Activated T-helper 1 cell treated with anti-CD3 and anti-CD28 coated beads, Interleukin-12 subunit alpha, Interleukin-12 subunit beta, Interleukin-2, Interleukin-4 antibody, amounts not matched to agents 30 ng/mL and 10 ng/mL and 1 ng/mL, durations not matched to agents 14 hours and 24 hours and 36 hours (primary cell): ENCODE measurements at regions of chr19 and their contacts with region 1.

Region 1: GRCh38 chr19:49640113-49640898 is at the start of gene RRAS:
- DNase-seq: peak; percentile 100
- H3K4me3 Mint-ChIP-seq: peak within 1 kb of the TSS; percentile 94
- H3K27ac Mint-ChIP-seq: peak within 1 kb of the TSS; percentile 99
- H3K4me1 Mint-ChIP-seq: peaks cover 55% of the 10 kb centered on the region
- H3K27me3 Mint-ChIP-seq: no peaks in the 10 kb centered on the region
- total RNA-seq, gene RRAS: 4.4 and 4.7 TPM in 2 replicates

Region 2: DNA sequence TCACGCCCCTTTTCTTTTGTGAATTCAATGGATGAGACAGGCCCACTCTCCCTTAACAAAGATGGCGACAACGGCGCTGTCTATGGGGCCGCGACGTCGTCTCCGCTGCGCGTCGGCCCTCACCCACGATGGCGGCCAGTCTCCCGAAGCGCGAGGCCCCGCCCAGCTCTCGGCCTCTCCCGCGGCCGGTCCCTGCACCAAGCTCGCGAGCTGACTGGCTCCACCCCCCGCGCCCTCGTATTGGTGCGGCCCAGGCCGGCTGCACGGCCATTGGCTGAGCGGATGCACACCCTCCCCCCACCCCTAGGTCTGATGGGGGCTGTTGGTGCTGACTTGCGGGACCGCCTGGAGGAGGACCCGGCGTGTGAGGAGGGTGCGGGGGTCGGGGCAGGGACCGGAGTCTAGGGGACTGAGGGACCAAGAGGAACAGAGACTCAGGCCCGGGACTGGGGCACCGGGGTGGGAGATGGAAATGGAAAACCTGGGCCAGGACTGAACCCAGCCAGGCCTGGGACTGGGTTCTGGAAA is 1016.2 kb before region 1 on chr19:
- intact Hi-C with region 1: loop called (anchors 5 kb)
- DNase-seq: peak; percentile 97
- H3K4me3 Mint-ChIP-seq: peak overlapping the region; percentile 83
- H3K27ac Mint-ChIP-seq: peak overlapping the region; percentile 94
- H3K4me1 Mint-ChIP-seq: peaks cover 39% of the 10 kb centered on the region
- H3K27me3 Mint-ChIP-seq: no peaks in the 10 kb centered on the region

Region 3: GRCh38 chr19:49451430-49452181 is 188.7 kb before region 1 on chr19 and contains the start of gene PIH1D1:
- intact Hi-C with region 1: loop called (anchors 1 kb)
- DNase-seq: peak; percentile 94
- H3K4me3 Mint-ChIP-seq: peak within 1 kb of the TSS; percentile 96
- H3K27ac Mint-ChIP-seq: peak within 1 kb of the TSS; percentile 99
- H3K4me1 Mint-ChIP-seq: peaks cover 55% of the 10 kb centered on the region
- H3K27me3 Mint-ChIP-seq: no peaks in the 10 kb centered on the region
- total RNA-seq, gene PIH1D1: 124 and 126 TPM in 2 replicates

Region 4: GRCh38 chr19:49544154-49544553 is 96.2 kb before region 1 on chr19:
- intact Hi-C with region 1: no loop called
- DNase-seq: no peak
- H3K4me3 Mint-ChIP-seq: no peak overlapping the region
- H3K27ac Mint-ChIP-seq: peak overlapping the region; percentile 64
- H3K4me1 Mint-ChIP-seq: peaks cover 26% of the 10 kb centered on the region
- H3K27me3 Mint-ChIP-seq: no peaks in the 10 kb centered on the region

Region 5: GRCh38 chr19:49590071-49590970 is 50.0 kb before region 1 on chr19:
- intact Hi-C with region 1: loop called (anchors 1 kb)
- DNase-seq: peak; percentile 93
- H3K4me3 Mint-ChIP-seq: peak overlapping the region; percentile 88
- H3K27ac Mint-ChIP-seq: peak overlapping the region; percentile 84
- H3K4me1 Mint-ChIP-seq: peaks cover 40% of the 10 kb centered on the region
- H3K27me3 Mint-ChIP-seq: peaks cover 10% of the 10 kb centered on the region

Region 6: GRCh38 chr19:49651029-49651825 is 10.9 kb after region 1 on chr19:
- intact Hi-C with region 1: no loop called
- DNase-seq: no peak
- H3K4me3 Mint-ChIP-seq: no peak overlapping the region
- H3K27ac Mint-ChIP-seq: no peak overlapping the region
- H3K4me1 Mint-ChIP-seq: no peaks in the 10 kb centered on the region
- H3K27me3 Mint-ChIP-seq: no peaks in the 10 kb centered on the region

Region 7: DNA sequence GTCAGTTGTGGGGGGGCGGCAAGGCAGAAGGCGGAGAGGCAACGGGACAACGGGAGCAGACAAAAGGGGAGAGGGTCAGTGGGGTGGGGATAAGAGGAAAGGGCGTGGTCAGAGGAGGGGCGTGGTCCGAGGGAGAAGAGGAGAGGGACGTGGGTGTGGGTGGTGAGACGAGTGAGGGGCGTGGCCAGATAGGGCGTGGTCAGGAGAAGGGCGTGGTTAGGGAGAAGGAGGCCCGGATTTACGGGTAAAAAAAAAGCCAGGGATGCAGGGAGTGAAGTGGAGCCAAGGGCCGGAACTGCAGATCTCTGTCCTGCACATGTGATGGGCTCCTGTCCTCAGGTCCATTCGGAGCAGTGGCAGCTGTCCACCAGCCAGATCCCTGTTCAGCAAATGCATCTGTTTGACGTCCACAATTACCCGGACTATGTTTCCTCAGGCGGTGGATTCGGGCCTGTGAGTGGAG is 72.1 kb after region 1 on chr19:
- intact Hi-C with region 1: no loop called
- DNase-seq: no peak
- H3K4me3 Mint-ChIP-seq: no peak overlapping the region
- H3K27ac Mint-ChIP-seq: no peak overlapping the region
- H3K4me1 Mint-ChIP-seq: peaks cover 3% of the 10 kb centered on the region
- H3K27me3 Mint-ChIP-seq: no peaks in the 10 kb centered on the region

Region 8: GRCh38 chr19:49779731-49780589 is 139.7 kb after region 1 on chr19:
- intact Hi-C with region 1: no loop called
- DNase-seq: no peak
- H3K4me3 Mint-ChIP-seq: no peak overlapping the region
- H3K27ac Mint-ChIP-seq: no peak overlapping the region
- H3K4me1 Mint-ChIP-seq: peaks cover 17% of the 10 kb centered on the region
- H3K27me3 Mint-ChIP-seq: no peaks in the 10 kb centered on the region

Region 9: DNA sequence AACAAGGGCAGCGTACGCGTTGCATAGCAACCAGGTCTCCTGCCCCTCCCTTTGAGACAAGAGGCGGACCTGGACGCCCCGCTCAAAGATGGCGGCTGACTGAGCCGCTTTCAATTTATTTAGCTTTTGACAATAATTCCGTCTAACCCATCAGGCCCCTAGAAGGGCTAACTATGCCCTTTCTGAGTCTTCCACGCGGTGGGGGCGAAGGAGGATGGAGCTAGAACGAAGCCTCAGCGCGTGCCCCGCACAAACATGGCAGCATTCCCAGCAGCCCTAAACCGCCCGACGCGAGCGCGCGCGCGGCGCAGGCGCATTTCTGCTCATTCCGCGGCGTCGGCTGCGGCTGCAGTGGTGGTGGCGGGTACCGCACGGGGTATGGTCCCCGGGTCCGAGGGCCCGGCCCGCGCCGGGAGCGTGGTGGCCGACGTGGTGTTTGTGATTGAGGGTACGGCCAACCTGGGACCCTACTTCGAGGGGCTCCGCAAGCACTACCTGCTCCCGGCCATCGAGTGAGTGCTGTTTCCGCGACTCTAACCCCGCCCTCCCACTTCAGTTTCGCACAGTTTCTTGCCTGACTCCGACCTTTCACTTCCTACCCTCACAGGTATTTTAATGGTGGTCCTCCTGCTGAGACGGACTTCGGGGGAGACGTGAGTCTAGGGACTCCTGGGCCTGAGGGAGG is 177.8 kb after region 1 on chr19 and contains the start of gene MED25:
- intact Hi-C with region 1: loop called (anchors 1 kb)
- DNase-seq: peak; percentile 88
- H3K4me3 Mint-ChIP-seq: peak within 1 kb of the TSS; percentile 94
- H3K27ac Mint-ChIP-seq: peak within 1 kb of the TSS; percentile 93
- H3K4me1 Mint-ChIP-seq: peaks cover 25% of the 10 kb centered on the region
- H3K27me3 Mint-ChIP-seq: no peaks in the 10 kb centered on the region
- total RNA-seq, gene MED25: 54.2 and 54.5 TPM in 2 replicates

Region 10: DNA sequence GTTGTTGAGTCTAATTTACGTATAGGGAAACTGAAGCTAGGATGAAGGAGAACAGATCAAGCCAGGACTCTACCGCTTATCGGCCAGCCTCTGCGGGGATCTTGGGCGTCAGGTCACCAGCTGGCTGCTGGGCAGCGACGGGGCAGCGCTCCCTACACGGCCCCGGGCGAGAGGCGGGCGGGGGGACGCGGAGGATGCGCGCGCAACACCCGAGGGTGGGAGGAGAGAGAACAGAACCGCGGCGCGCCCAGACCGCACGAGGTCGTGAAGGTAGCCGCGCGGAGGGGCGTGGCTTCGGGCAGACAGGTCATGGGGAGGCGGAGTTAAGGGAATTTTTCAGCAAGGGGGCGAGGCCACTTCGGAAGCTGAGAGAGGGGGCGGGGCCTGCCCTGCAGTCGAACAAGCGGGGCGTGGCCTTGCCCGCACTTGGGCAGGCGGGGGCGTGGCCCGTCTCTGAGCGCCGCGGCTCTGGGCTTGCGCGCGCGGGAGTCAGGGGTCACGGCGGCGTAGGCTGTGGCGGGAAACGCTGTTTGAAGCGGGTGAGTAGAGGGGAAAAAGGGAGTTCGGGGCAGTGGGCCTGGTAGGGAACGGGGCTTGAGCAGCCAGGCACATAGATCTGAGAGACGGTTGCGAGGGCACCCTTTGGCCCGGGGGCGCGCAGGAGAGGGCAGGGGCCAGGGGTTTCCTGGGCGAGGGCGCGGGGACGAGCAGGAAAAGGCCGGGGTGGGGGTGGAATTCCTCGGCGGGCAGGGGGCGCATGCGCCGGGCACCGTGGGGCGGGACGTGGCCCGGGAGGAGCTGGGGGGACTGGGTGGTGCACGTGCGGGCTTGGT is 743.8 kb after region 1 on chr19 and contains the start of gene POLD1:
- intact Hi-C with region 1: loop called (anchors 1 kb)
- DNase-seq: peak; percentile 99
- H3K4me3 Mint-ChIP-seq: peak within 1 kb of the TSS; percentile 91
- H3K27ac Mint-ChIP-seq: peak within 1 kb of the TSS; percentile 96
- H3K4me1 Mint-ChIP-seq: peaks cover 28% of the 10 kb centered on the region
- H3K27me3 Mint-ChIP-seq: no peaks in the 10 kb centered on the region
- total RNA-seq, gene POLD1: 171 and 178 TPM in 2 replicates